ENCODE measurements at regions of chr3 and their contacts with region 1.

Region 1: GRCh38 chr3:112519424-112520001 is 20.2 kb upstream of the BTLA start:
- DNase-seq: peak; percentile 66

Region 2: DNA sequence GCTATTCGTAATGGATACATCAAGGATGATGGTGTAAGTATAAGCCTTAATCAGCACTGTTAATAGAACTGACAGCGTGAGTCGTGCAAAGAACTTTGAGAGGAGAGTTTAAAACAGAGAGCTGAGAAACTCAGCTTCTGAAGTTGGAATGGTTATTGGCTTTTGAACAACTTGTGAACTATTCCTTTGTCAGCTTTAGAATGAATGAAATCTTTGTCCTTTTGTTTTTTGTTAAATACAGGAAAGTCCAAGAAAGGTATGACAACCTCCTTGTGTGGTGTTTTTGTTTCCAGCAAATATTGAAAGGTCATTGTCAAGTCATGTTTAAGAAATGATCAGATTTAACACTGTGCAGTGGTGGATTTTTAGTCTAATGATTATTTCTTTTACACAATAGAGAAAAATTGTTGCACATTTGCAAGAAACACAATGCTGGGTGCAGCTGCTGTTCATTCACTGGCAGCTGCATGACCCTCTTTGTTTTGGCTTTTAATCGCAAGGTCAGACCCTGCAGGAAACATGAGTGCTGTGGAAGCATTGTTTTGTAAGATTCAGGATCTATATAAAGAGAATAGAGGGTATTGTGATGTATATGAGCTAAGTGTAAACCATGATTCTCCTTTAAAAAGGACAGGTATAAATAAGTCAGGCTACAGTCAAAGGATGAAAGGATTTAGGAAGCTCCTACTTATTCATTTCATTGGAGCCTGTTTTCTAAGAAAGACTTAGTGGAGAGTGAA is 562.3 kb before region 1 on chr3:
- in situ Hi-C with region 1: no loop called
- DNase-seq: no peak

Region 3: GRCh38 chr3:112136959-112137693 is 382.4 kb before region 1 on chr3:
- in situ Hi-C with region 1: loop called (anchors 25 kb)
- DNase-seq: peak; percentile 40

Region 4: GRCh38 chr3:112327371-112327951 is 192.1 kb before region 1 on chr3:
- in situ Hi-C with region 1: loop called (anchors 25 kb)
- DNase-seq: peak; percentile 63

Region 5: GRCh38 chr3:112845772-112846171 is 326.3 kb after region 1 on chr3:
- in situ Hi-C with region 1: no loop called
- DNase-seq: no peak

Measured in KBM-7 (cell line).